Sciatic nerve (tissue), 2 donors: ENCODE measurements at regions of chr4 and their contacts with region 1.

Region 1: DNA sequence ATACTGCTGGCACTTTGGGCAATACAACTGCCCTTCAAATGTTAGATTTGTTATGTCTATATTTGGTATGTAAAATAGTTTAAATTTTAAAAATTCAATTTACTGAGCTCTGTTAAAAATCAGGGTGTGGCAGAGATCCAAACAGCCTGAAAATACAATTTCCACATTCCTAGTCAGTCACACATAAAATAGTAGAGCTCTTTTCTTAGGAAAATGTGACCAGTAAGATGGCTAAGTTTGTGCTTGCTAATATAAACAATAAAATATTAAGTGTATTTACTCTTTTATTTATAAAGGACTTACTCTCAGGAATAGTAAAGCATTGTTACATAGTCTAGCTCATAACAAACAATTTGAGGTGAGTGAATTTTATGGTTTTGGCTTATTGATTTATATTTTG is 200.2 kb downstream of the DKK2 start:
- DNase-seq: no peak
- ATAC-seq: no peak

Region 2: DNA sequence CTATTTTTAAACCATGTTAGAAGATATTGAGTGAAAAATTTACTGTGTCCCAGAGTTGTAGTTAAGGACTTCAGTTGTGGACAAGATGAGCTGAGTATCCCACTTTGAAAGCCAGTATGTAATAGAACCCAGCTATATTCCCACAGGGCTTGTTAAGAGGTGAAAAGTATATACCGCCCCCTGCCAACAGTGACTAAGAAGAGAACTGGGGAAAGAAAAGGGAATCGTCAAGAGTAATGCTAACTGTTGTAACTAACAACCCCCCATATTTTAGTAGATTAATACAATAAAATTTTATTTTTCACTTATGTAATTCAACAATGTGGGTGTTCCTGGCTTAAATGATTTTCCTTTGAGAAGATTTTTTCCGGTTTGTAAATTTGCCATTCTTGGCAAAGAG is 217.0 kb before region 1 on chr4:
- intact Hi-C with region 1: no loop called
- DNase-seq: no peak
- ATAC-seq: no peak

Region 3: GRCh38 chr4:106773076-106773905 is 62.6 kb before region 1 on chr4:
- intact Hi-C with region 1: no loop called
- DNase-seq: no peak
- ATAC-seq: no peak

Region 4: DNA sequence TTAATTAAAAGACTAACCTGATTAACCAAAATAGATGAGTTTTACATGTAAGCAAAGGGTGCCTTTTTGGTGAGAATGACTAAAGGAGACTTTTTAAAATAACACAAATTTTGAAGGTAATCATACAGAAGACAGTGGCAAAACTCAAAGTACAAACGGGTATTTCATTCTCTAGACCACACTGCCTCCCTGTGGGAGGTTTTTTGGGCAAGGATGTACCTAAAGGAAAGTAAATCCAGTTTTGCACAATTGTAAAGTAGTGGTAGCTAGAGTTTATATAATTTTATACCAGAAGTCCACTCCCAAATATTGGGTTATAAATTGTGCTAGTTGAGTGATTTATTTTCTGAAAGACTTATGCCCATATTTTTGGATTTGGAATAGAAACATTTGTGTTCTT is 683.1 kb after region 1 on chr4:
- intact Hi-C with region 1: loop called (anchors 10 kb)
- DNase-seq: no peak
- ATAC-seq: no peak